AG04449 (cell line): ENCODE measurements at regions of chr6 and their contacts with region 1.

Region 1: DNA sequence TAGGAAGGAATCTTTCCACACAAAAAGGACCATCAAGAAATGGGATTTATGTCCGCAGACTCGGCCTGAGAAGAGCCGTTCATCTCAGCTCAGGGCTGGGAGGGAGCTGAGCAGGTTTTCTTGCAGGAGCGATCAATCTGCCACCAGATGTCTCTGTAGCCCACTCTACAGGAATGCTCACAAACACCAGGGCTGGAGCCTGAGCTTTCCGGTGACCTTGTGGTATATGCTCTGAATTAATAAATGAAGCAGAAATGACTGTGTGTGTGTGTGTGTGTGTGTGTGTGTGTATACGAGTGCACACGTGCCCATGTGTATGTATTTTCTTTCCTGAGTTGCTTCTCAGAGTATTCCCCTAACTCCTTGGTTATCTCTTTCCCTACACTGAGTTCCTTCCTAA is 12.0 kb downstream of the CD83 start:
- DNase-seq: peak; percentile 14
- H3K4me3 ChIP-seq: no peak overlapping the region
- CTCF ChIP-seq: peak; percentile 58

Region 2: GRCh38 chr6:13952101-13952500 is 177.5 kb before region 1 on chr6:
- CTCF ChIA-PET with region 1: no interaction called
- POLR2A ChIA-PET with region 1: no interaction called
- DNase-seq: no peak
- H3K4me3 ChIP-seq: no peak overlapping the region
- CTCF ChIP-seq: no peak

Region 3: GRCh38 chr6:14144678-14145113 is 15.1 kb after region 1 on chr6:
- CTCF ChIA-PET with region 1: interaction called, 110 read pairs
- POLR2A ChIA-PET with region 1: no interaction called
- DNase-seq: no peak
- H3K4me3 ChIP-seq: no peak overlapping the region
- CTCF ChIP-seq: peak; percentile 95

Region 4: GRCh38 chr6:14276667-14277404 is 147.3 kb after region 1 on chr6:
- CTCF ChIA-PET with region 1: no interaction called
- POLR2A ChIA-PET with region 1: no interaction called
- DNase-seq: no peak
- H3K4me3 ChIP-seq: no peak overlapping the region
- CTCF ChIP-seq: no peak

Region 5: DNA sequence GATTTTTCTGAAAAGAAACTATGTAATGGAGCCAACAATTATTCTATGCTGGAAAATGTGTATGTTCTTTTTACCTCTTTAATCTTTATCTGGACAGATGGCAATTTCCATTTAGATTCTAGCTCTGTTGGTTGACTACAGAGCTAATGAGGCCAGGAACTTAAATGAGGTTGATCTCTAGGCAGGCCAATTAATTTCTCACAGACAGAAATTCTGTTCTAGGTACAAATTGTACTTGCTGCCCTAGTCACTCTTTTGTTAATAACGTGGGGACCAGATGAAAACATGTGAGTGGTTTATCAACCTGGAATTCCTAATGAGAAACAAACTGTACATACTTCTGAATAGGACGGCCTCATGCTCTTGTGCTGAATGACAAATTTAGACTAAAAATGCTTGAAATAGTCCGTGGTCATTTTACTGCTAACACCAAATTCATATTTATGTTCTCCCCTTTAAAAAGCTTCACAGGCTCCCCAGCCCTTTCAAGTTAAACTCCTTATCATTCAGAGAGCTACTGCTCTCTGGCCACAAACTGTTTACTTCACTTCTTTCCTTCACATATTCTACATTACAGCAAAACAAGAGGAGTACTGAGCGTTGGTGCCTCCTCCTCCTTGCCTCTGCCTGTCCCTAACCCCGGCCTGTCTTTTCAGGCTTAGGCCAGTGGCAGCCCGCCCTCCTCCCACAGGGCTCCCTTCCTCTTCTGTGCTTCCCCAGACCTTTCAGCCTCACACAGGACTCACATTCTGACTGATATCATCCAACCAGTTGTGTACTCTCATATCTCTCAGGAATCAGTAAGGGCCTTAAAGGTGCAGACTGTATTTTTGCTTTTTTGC is 1491.8 kb after region 1 on chr6:
- CTCF ChIA-PET with region 1: interaction called, 55 read pairs
- POLR2A ChIA-PET with region 1: no interaction called
- DNase-seq: no peak
- H3K4me3 ChIP-seq: no peak overlapping the region
- CTCF ChIP-seq: no peak